ENCODE measurements at regions of chr7 and their contacts with region 1.

Region 1: DNA sequence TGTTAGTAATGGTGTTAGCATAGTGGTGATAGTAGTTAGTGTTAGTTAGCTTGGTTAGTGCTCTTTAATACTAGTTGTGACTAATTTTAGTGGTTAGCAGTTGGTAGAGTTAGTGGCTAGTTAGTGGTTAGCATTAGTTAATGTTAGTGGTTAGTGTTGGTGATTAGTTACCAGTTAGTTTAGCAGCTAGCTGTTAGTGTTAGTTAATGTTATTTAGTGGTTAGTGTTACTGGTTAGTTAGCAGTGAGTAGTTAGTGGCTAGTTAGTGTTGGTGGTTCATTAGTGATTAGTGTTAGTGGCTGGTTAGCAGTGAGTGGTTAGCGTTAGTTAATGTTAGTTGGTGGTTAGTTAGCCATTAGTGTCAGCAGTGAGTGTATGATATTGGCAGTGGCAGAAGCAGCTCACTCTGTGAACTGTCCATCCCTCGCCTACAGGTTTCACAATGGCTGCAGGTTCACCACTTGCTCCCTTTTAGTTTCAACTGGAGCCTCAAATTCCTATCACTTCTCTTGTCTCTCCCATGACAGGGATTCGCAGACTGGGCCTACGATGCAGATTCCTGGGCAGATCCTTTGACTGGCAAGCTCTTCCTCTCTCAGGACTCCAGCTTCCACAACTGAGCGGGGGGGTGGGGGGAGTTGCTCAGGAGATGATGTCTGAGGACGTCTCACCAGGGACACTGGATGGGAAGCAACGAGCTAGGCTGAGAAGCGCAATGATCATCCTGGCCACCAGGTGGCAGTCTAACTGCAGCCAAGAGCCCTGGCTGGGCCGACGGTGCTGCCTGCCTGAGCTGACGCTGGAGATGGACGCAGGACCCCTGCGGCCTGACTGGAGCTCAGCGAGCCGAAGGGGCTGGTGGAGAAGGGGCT is 19.5 kb downstream of the GHRHR start:
- DNase-seq: peak; percentile 68
- ATAC-seq: peak; percentile 64
- H3K4me3 ChIP-seq: no peak overlapping the region
- H3K4me3 Mint-ChIP-seq: no peak overlapping the region
- H3K27ac ChIP-seq: no peak overlapping the region
- H3K27ac Mint-ChIP-seq: peak overlapping the region; percentile 4
- H3K4me1 ChIP-seq: no peaks in the 10 kb centered on the region
- H3K4me1 Mint-ChIP-seq: peaks cover 7% of the 10 kb centered on the region
- H3K27me3 ChIP-seq: peaks cover 0 to 8% (median 4%) of the 10 kb centered on the region in 4 experiments
- H3K27me3 Mint-ChIP-seq: peaks cover 41% of the 10 kb centered on the region
- CTCF ChIP-seq: peak; percentile 92

Region 2: GRCh38 chr7:30996256-30996655 is 13.0 kb after region 1 on chr7:
- CTCF ChIA-PET with region 1: interaction called, 20 read pairs
- POLR2A ChIA-PET with region 1: no interaction called
- intact Hi-C with region 1: no loop called
- DNase-seq: no peak
- ATAC-seq: no peak
- H3K4me3 ChIP-seq: no peak overlapping the region
- H3K4me3 Mint-ChIP-seq: no peak overlapping the region
- H3K27ac ChIP-seq: no peak overlapping the region
- H3K27ac Mint-ChIP-seq: no peak overlapping the region
- H3K4me1 ChIP-seq: no peaks in the 10 kb centered on the region
- H3K4me1 Mint-ChIP-seq: no peaks in the 10 kb centered on the region
- H3K27me3 ChIP-seq: no peaks in the 10 kb centered on the region
- H3K27me3 Mint-ChIP-seq: peaks cover 3% of the 10 kb centered on the region
- CTCF ChIP-seq: no peak

Region 3: GRCh38 chr7:31122649-31123058 is 139.4 kb after region 1 on chr7:
- CTCF ChIA-PET with region 1: interaction called, 12 read pairs
- POLR2A ChIA-PET with region 1: no interaction called
- intact Hi-C with region 1: loop called (anchors 2 kb)
- DNase-seq: peak; percentile 27
- ATAC-seq: no peak
- H3K4me3 ChIP-seq: no peak overlapping the region
- H3K4me3 Mint-ChIP-seq: no peak overlapping the region
- H3K27ac ChIP-seq: no peak overlapping the region
- H3K27ac Mint-ChIP-seq: no peak overlapping the region
- H3K4me1 ChIP-seq: no peaks in the 10 kb centered on the region
- H3K4me1 Mint-ChIP-seq: no peaks in the 10 kb centered on the region
- H3K27me3 ChIP-seq: no peaks in the 10 kb centered on the region
- H3K27me3 Mint-ChIP-seq: peaks cover 16% of the 10 kb centered on the region
- CTCF ChIP-seq: peak; percentile 66

Region 4: DNA sequence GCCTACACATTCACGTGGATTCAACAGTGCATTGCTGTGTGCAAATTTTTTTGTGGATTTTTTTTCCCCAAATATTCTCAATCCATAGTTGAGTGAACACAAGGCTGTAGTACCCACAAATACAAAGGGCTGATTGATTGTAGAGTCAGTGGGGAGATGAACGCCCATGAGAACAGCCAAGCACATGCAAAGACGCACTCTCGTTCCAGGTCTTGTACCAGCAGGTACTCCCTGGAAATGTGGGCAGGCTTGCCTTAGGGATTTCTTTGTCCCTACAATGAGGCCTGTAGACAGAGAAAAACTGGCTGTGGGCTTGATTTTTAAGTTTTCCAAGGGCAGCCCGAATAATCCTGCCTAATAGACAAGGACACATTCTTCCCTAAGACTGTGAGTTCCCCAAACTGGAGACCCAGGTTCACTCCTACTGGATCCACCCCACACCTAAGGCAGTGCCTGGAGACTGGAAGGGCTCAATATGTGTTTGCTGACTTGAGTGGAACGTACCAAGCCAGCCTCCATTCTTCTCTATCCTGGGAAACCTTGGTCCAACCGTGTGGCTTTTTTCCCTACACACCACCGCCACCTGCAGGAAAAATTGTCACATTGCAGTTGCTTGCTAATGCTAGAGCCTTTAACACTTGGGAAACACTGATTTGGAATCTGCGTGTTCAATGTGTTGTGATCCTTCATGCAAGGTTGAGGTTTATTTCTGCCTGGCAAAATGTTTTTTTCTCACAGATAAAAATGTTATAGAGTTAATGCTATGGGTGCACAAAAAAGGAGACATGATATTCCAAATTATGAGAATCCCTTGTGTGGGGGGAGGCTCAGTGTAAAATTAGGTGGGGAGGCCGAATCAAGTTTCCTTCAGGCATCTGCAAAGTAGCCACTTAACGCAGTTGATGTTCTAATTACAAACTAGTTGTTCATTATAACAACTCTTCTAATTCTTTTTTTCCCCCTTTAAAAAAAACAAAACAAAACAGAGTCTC is 753.0 kb after region 1 on chr7:
- CTCF ChIA-PET with region 1: no interaction called
- POLR2A ChIA-PET with region 1: no interaction called
- intact Hi-C with region 1: loop called (anchors 10 kb)
- DNase-seq: peak; percentile 10
- ATAC-seq: peak; percentile 24
- H3K4me3 ChIP-seq: no peak overlapping the region
- H3K4me3 Mint-ChIP-seq: no peak overlapping the region
- H3K27ac ChIP-seq: no peak overlapping the region
- H3K27ac Mint-ChIP-seq: no peak overlapping the region
- H3K4me1 ChIP-seq: no peaks in the 10 kb centered on the region
- H3K4me1 Mint-ChIP-seq: no peaks in the 10 kb centered on the region
- H3K27me3 ChIP-seq: no peaks in the 10 kb centered on the region
- H3K27me3 Mint-ChIP-seq: peaks cover 8% of the 10 kb centered on the region
- CTCF ChIP-seq: peak; percentile 74

Measured in B cell (primary cell).